Lower leg skin (tissue), 4 donors: ENCODE measurements at regions of chr14 and their contacts with region 1.

Region 1: DNA sequence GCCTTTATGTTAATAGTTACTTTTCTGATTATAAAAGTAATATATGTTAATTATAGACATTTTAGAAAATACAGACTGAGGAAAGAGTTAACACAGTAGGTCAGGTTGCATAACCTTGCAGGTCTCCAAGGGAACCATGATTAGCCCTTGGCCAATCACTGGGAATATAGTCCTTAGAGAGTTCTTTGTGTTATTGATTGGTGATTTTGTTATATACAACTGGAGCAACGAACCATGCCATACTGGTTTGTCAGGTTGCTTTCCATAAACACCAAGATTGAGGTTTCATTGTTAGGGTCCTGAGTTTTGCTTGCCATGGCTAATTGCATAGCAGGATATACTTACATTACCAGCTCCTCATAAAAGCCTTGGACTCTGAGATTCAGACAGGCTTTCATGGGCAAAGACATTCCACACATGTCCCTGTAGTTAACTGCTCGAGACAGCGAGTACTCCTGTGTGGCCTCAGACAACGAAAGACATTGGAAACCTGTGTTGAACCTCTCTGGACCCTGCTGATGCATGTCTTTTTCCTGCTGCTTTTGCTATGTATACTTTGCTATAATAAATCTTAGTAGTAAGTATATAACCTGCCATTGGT is 33.7 kb downstream of the MAPK1IP1L start:
- DNase-seq: peak in 1 of 2 donors; percentile 8
- H3K4me3 ChIP-seq: no peak overlapping the region
- CTCF ChIP-seq: no peak
- POLR2A ChIP-seq: no peak

Region 2: GRCh38 chr14:55129428-55130195 is 44.5 kb after region 1 on chr14:
- intact Hi-C with region 1: loop called (anchors 10 kb)
- DNase-seq: peak; percentile 65 to 95
- H3K4me3 ChIP-seq: peak overlapping the region; percentile 84
- CTCF ChIP-seq: no peak
- POLR2A ChIP-seq: no peak